Colonic mucosa (tissue), 4 donors: ENCODE measurements at regions of chr6 and their contacts with region 1.

Region 1: GRCh38 chr6:28080631-28081485 is 490 bp downstream of the ZNF165 start:
- DNase-seq: peak; percentile 94
- H3K4me3 ChIP-seq: peak overlapping the region; percentile 76
- H3K27ac ChIP-seq: peak overlapping the region; percentile 89
- H3K4me1 ChIP-seq: peaks cover 3% of the 10 kb centered on the region
- H3K27me3 ChIP-seq: no peaks in the 10 kb centered on the region
- CTCF ChIP-seq: no peak

Region 2: DNA sequence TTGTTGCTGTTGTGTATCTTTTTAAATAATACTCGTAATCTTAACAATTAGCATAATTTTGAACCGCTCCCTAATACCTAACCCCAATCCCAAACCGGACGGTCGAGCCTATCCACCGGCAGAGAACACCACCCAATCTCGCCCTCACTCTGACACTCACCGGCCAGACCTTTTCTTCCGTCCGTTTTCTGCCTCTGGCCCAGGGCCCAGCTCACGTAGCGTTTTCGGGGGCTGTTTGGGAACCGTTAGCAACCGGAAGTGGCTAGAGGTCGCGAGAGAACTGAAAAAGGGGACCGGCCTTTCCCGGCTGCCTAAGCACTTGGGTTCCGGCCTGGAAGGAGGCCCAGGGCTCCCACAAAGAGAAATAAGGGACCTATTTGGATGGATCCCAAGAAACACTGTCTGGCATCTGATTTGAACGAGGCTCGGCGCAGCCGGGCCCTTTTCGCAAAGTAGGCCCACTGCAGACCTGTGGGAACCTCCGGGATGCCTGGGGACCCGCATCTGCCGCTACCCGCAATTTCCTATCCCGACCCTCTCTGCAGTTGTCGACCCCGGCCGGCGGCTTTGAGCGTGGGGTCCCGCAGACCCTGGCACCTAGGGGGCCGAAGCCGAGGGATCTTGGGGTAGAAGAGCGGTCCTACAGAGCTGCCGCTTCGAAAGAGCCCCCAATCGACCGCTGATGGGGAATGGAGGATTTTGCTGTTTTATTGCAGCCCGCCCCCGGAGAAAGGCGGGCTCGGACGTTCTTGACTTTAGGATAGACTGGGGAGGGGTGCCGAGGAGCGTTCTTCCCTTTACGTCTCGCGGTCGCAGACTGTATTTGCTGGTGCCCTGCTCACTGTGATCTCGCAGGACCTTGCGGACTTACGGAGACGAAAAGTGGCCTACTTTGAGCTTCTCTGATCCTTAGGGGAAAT is 56.0 kb after region 1 on chr6:
- intact Hi-C with region 1: loop called (anchors 5 kb)
- DNase-seq: peak; percentile 85
- H3K4me3 ChIP-seq: peak overlapping the region; percentile 91
- H3K27ac ChIP-seq: peak overlapping the region; percentile 81
- H3K4me1 ChIP-seq: peaks cover 5% of the 10 kb centered on the region
- H3K27me3 ChIP-seq: no peaks in the 10 kb centered on the region
- CTCF ChIP-seq: no peak

Region 3: GRCh38 chr6:28225056-28225834 is 144.4 kb after region 1 on chr6 and contains the start of gene ZSCAN9:
- intact Hi-C with region 1: loop called (anchors 5 kb)
- DNase-seq: peak; percentile 79
- H3K4me3 ChIP-seq: peak within 1 kb of the TSS; percentile 79
- H3K27ac ChIP-seq: peak within 1 kb of the TSS; percentile 47
- H3K4me1 ChIP-seq: peaks cover 5% of the 10 kb centered on the region
- H3K27me3 ChIP-seq: no peaks in the 10 kb centered on the region
- CTCF ChIP-seq: no peak
- total RNA-seq, gene ZSCAN9: 8.9 to 9.8 TPM